ENCODE measurements at regions of chr4 and their contacts with region 1.

Region 1: DNA sequence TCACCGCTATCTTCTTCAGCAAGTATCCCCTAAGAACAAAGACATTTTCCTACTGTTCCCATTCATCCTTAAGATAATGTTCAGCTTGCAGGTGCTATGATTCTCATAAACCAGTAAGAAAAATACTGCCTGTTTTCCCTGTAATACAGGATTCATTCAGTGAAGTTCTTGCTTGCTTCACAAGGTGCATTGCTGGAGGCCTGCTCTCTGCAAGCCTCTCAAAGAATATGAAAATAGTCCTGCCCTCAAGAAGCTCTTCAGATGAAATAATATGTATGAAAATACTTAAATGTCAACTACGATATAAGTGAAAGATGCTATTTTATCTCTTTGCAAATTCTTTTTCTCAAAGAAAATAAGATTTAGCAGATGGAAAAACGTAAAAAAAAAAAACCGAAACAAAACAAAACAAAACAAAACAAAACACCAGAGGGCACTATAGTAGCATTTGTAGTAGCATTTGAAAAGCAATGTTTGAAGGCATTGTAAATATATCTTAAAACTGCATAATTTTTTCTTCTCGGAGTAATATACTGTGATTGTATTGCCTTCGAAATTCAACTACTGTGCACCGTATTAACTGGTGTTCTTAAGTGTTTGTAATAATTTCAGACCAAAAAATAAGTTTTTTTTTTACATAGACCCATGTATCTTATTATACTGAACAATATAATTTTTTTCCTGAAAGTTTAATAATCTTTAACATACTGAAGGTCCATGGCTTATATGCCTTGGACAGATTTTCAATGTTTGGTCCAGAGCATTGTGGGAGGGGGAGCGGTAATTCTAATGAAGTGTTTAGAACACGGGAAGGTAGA is 26.0 kb downstream of the ADH4 start:
- DNase-seq: peak in 3 of 14 experiments; percentile 7 to 21 (median 15)
- ATAC-seq: no peak
- H3K4me3 ChIP-seq: no peak overlapping the region
- H3K4me3 Mint-ChIP-seq: no peak overlapping the region
- H3K27ac ChIP-seq: no peak overlapping the region
- H3K27ac Mint-ChIP-seq: no peak overlapping the region
- H3K4me1 ChIP-seq: no peaks in the 10 kb centered on the region
- H3K4me1 Mint-ChIP-seq: no peaks in the 10 kb centered on the region
- H3K27me3 ChIP-seq: no peaks in the 10 kb centered on the region
- H3K27me3 Mint-ChIP-seq: no peaks in the 10 kb centered on the region
- CTCF ChIP-seq: no peak

Region 2: DNA sequence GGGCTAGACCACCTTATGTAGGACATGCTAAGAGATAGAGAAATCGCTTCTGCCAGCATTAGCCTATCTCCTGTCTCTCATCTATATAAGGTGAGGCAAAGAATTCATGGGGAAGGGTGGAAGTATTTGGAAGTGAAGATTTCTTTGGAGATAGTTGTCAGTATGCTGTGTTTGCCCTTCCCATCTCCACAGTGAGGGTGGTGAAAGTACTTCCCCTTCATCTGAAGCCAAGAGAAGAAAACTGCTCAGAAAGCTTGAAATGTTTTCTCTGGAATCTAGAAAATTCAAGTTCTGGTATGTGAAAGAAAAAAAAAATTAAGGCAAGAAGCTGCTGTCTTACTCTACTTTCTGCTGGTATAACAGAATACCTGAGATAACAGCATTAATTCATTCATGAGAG is 17.2 kb before region 1 on chr4:
- CTCF ChIA-PET with region 1: no interaction called
- POLR2A ChIA-PET with region 1: no interaction called
- intact Hi-C with region 1: no loop called
- DNase-seq: no peak
- ATAC-seq: no peak
- H3K4me3 ChIP-seq: no peak overlapping the region
- H3K4me3 Mint-ChIP-seq: no peak overlapping the region
- H3K27ac ChIP-seq: no peak overlapping the region
- H3K27ac Mint-ChIP-seq: no peak overlapping the region
- H3K4me1 ChIP-seq: no peaks in the 10 kb centered on the region
- H3K4me1 Mint-ChIP-seq: no peaks in the 10 kb centered on the region
- H3K27me3 ChIP-seq: no peaks in the 10 kb centered on the region
- H3K27me3 Mint-ChIP-seq: no peaks in the 10 kb centered on the region
- CTCF ChIP-seq: no peak

Region 3: GRCh38 chr4:99405433-99406115 is 287.5 kb after region 1 on chr4:
- CTCF ChIA-PET with region 1: interaction called, 3 read pairs
- POLR2A ChIA-PET with region 1: no interaction called
- intact Hi-C with region 1: loop called (anchors 1 to 2 kb)
- DNase-seq: peak; percentile 15 to 75 (median 48)
- ATAC-seq: peak; percentile 79
- H3K4me3 ChIP-seq: no peak overlapping the region
- H3K4me3 Mint-ChIP-seq: no peak overlapping the region
- H3K27ac ChIP-seq: no peak overlapping the region
- H3K27ac Mint-ChIP-seq: no peak overlapping the region
- H3K4me1 ChIP-seq: no peaks in the 10 kb centered on the region
- H3K4me1 Mint-ChIP-seq: peaks cover 5% of the 10 kb centered on the region
- H3K27me3 ChIP-seq: no peaks in the 10 kb centered on the region
- H3K27me3 Mint-ChIP-seq: no peaks in the 10 kb centered on the region
- CTCF ChIP-seq: peak; percentile 86

Region 4: DNA sequence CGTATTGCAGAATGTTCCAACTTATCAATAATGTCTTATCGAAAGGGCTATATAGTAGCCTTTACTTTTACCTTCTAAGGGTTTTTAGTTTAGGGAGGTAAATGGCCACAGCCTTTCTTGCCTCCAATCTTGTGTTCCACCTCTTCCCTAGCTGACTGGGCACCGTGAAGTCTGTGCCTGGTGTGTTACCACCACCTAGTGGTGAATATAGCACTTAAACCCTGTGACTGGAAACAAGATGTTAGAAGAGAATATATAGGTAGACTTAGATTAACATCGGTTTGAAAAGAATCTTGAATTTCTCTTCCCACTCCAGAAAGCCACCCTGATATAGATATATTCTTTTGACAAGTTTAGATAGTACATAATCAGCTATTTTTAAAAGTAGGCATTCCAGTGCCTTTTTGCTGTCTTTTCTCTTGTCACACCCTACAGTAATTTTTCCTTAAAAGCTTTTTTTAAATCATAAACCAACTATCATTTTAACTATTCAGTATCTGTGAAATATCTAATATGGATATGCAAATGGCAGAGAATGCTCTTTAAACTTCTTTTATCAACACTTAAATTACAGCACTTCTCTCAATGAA is 344.9 kb after region 1 on chr4:
- CTCF ChIA-PET with region 1: no interaction called
- POLR2A ChIA-PET with region 1: no interaction called
- intact Hi-C with region 1: loop called in 1 of 2 experiments (anchors 2 kb)
- DNase-seq: peak; percentile 4 to 67 (median 25)
- ATAC-seq: peak; percentile 70
- H3K4me3 ChIP-seq: no peak overlapping the region
- H3K4me3 Mint-ChIP-seq: no peak overlapping the region
- H3K27ac ChIP-seq: no peak overlapping the region
- H3K27ac Mint-ChIP-seq: no peak overlapping the region
- H3K4me1 ChIP-seq: no peaks in the 10 kb centered on the region
- H3K4me1 Mint-ChIP-seq: no peaks in the 10 kb centered on the region
- H3K27me3 ChIP-seq: no peaks in the 10 kb centered on the region
- H3K27me3 Mint-ChIP-seq: peaks cover 18% of the 10 kb centered on the region
- CTCF ChIP-seq: peak; percentile 83

Region 5: DNA sequence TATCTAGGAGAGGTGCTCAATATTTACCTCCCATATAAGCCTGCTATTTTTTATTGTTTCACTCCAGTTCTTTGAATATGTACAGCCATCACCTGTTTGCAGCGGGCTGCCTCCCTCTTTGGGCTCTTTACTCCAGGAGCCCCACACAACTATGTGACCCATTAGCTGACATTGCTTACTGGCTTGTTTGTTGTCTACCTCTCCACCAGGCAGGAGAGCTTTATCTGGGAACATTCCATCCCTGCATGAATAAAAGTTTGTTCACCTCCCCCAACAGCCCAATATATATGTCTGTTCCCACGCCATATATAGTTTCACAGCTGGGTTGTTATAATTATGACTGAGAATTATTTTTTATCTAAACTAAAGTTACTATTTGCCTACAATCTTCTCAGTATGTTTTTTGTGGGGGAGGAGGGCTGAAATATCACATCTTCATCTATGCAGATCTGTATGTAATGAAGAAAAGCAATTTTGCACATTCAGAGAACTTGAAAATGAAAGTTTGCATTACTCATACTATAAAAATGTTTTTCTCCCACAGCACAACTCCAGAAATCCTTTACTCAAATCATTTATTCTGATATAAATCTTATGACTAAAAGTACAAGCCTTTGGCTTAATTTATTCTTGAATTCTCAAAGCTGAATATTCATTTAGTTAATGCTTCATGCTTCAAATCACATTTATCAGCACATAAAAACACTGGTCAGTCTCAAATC is 637.3 kb after region 1 on chr4:
- CTCF ChIA-PET with region 1: no interaction called
- POLR2A ChIA-PET with region 1: no interaction called
- intact Hi-C with region 1: no loop called
- DNase-seq: no peak
- ATAC-seq: no peak
- H3K4me3 ChIP-seq: no peak overlapping the region
- H3K4me3 Mint-ChIP-seq: no peak overlapping the region
- H3K27ac ChIP-seq: no peak overlapping the region
- H3K27ac Mint-ChIP-seq: no peak overlapping the region
- H3K4me1 ChIP-seq: no peaks in the 10 kb centered on the region
- H3K4me1 Mint-ChIP-seq: no peaks in the 10 kb centered on the region
- H3K27me3 ChIP-seq: no peaks in the 10 kb centered on the region
- H3K27me3 Mint-ChIP-seq: no peaks in the 10 kb centered on the region
- CTCF ChIP-seq: no peak

Region 6: DNA sequence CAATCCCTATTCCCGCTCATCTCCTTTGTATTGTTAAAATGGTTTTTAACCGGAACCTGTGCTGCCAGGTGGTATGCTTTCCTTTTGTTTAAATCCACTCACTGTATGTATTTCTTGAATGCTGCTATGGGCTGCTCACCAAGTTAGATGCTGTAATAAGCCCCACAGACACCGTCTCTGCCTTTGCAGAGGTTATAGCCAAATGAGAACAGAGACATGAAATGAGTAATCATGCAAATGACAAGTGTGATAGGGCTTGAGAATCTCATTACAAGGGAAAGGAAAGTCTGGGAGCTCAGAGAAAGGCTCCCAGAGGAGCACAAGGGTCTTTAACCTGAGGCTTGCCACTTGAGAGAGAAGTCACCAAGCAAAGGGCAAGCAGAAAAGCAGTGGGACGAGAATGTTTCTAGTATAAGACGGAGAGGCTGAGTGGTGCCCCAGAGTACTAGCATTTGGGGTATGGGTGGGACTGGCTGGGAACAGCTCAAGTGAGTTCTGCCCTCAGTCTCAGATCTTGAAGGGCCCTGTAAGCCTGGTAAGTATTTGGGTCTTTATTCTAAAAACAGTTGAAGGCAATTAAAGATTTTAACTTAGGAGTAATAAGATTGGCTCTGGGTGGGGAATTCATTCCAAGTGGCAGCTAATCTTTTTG is 942.8 kb after region 1 on chr4:
- CTCF ChIA-PET with region 1: no interaction called
- POLR2A ChIA-PET with region 1: no interaction called
- intact Hi-C with region 1: loop called in 1 of 2 experiments (anchors 10 kb)
- DNase-seq: no peak
- ATAC-seq: no peak
- H3K4me3 ChIP-seq: no peak overlapping the region
- H3K4me3 Mint-ChIP-seq: no peak overlapping the region
- H3K27ac ChIP-seq: no peak overlapping the region
- H3K27ac Mint-ChIP-seq: no peak overlapping the region
- H3K4me1 ChIP-seq: no peaks in the 10 kb centered on the region
- H3K4me1 Mint-ChIP-seq: no peaks in the 10 kb centered on the region
- H3K27me3 ChIP-seq: peaks cover 0 to 3% of the 10 kb centered on the region in 2 experiments
- H3K27me3 Mint-ChIP-seq: peaks cover 22% of the 10 kb centered on the region
- CTCF ChIP-seq: no peak